CD4-positive, alpha-beta memory T cell (primary cell): ENCODE measurements at regions of chr18 and their contacts with region 1.

Region 1: GRCh38 chr18:77132371-77133050 is at the start of gene MBP:
- DNase-seq: peak; percentile 58 to 75 (median 70)
- H3K4me3 ChIP-seq: peak within 1 kb of the TSS; percentile 81 to 82
- H3K4me3 Mint-ChIP-seq: peak within 1 kb of the TSS; percentile 98 to 100 (median 98)
- H3K27ac ChIP-seq: peak within 1 kb of the TSS; percentile 85
- H3K27ac Mint-ChIP-seq: peak within 1 kb of the TSS; percentile 94 to 99 (median 97)
- H3K4me1 ChIP-seq: peaks cover 54% of the 10 kb centered on the region
- H3K4me1 Mint-ChIP-seq: peaks cover 38 to 66% (median 50%) of the 10 kb centered on the region in 4 donors
- H3K27me3 ChIP-seq: no peaks in the 10 kb centered on the region
- H3K27me3 Mint-ChIP-seq: no peaks in the 10 kb centered on the region
- total RNA-seq, gene MBP: 179 to 187 TPM

Region 2: GRCh38 chr18:77054606-77055428 is 77.7 kb before region 1 on chr18:
- CTCF ChIA-PET with region 1: interaction called, 9 read pairs
- POLR2A ChIA-PET with region 1: interaction called, 68 read pairs
- intact Hi-C with region 1: loop called (anchors 1 kb)
- DNase-seq: peak; percentile 80 to 88 (median 86)
- H3K4me3 ChIP-seq: peak overlapping the region in 1 of 2 donors; percentile 54
- H3K4me3 Mint-ChIP-seq: peak overlapping the region; percentile 72 to 92 (median 86)
- H3K27ac ChIP-seq: peak overlapping the region; percentile 84
- H3K27ac Mint-ChIP-seq: peak overlapping the region; percentile 93 to 100 (median 97)
- H3K4me1 ChIP-seq: peaks cover 83% of the 10 kb centered on the region
- H3K4me1 Mint-ChIP-seq: peaks cover 56 to 79% (median 68%) of the 10 kb centered on the region in 4 donors
- H3K27me3 ChIP-seq: no peaks in the 10 kb centered on the region
- H3K27me3 Mint-ChIP-seq: no peaks in the 10 kb centered on the region

Region 3: GRCh38 chr18:77079954-77080682 is 52.4 kb before region 1 on chr18:
- CTCF ChIA-PET with region 1: no interaction called
- POLR2A ChIA-PET with region 1: interaction called, 10 read pairs
- intact Hi-C with region 1: no loop called
- DNase-seq: peak in 2 of 5 donors; percentile 30 to 55
- H3K4me3 ChIP-seq: no peak overlapping the region
- H3K4me3 Mint-ChIP-seq: peak overlapping the region in 6 of 8 donors; percentile 41 to 69 (median 61)
- H3K27ac ChIP-seq: peak overlapping the region; percentile 38
- H3K27ac Mint-ChIP-seq: peak overlapping the region; percentile 61 to 92 (median 85)
- H3K4me1 ChIP-seq: peaks cover 80% of the 10 kb centered on the region
- H3K4me1 Mint-ChIP-seq: peaks cover 55 to 99% (median 79%) of the 10 kb centered on the region in 4 donors
- H3K27me3 ChIP-seq: no peaks in the 10 kb centered on the region
- H3K27me3 Mint-ChIP-seq: no peaks in the 10 kb centered on the region

Region 4: DNA sequence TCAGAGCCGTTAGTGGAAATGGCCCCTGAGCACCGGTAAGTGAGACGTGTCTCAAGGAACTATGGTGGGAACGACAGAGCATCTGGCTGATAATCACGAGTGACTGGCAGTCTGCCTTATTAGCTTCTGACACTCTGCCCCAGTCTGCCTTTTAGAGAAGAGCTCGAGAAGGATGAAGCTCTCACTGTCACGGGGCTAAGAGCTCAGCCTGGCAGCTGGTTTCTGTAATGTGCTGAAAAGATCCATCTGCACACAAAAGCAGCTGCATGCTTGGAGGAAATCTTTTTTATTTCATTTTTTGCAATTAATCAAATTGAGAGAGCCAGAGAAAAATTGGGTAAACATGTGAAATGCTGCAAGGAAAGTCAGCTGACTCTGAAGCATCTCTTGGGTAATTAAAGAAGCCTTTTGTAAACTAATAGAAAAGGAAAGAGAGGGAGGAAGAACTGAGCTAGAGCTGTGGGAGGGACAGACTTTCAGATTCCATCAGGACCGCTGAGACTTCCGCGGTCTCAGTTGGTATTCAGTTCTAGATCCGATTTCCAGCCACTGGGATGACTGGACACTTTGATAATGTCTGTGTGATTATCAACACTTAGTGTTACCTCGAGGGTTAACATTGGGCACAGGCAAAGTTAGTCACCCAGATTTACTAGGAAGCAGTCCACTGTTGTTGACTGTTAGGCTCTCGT is 24.4 kb before region 1 on chr18:
- CTCF ChIA-PET with region 1: interaction called, 19 read pairs
- POLR2A ChIA-PET with region 1: interaction called, 126 read pairs
- intact Hi-C with region 1: loop called (anchors 1 kb)
- DNase-seq: peak in 3 of 5 donors; percentile 33 to 67 (median 38)
- H3K4me3 ChIP-seq: no peak overlapping the region
- H3K4me3 Mint-ChIP-seq: peak overlapping the region in 7 of 8 donors; percentile 74 to 92 (median 82)
- H3K27ac ChIP-seq: peak overlapping the region; percentile 67
- H3K27ac Mint-ChIP-seq: peak overlapping the region; percentile 86 to 99 (median 97)
- H3K4me1 ChIP-seq: peaks cover 98% of the 10 kb centered on the region
- H3K4me1 Mint-ChIP-seq: peaks cover 78 to 100% (median 88%) of the 10 kb centered on the region in 4 donors
- H3K27me3 ChIP-seq: no peaks in the 10 kb centered on the region
- H3K27me3 Mint-ChIP-seq: no peaks in the 10 kb centered on the region

Region 5: GRCh38 chr18:77207540-77207939 is 75.0 kb after region 1 on chr18:
- CTCF ChIA-PET with region 1: interaction called, 15 read pairs
- POLR2A ChIA-PET with region 1: interaction called, 16 read pairs
- intact Hi-C with region 1: no loop called
- DNase-seq: peak; percentile 55 to 79 (median 67)
- H3K4me3 ChIP-seq: no peak overlapping the region
- H3K4me3 Mint-ChIP-seq: peak overlapping the region; percentile 60 to 80 (median 72)
- H3K27ac ChIP-seq: no peak overlapping the region
- H3K27ac Mint-ChIP-seq: peak overlapping the region; percentile 41 to 92 (median 85)
- H3K4me1 ChIP-seq: peaks cover 37% of the 10 kb centered on the region
- H3K4me1 Mint-ChIP-seq: peaks cover 29 to 52% (median 41%) of the 10 kb centered on the region in 4 donors
- H3K27me3 ChIP-seq: no peaks in the 10 kb centered on the region
- H3K27me3 Mint-ChIP-seq: peaks cover 0 to 4% of the 10 kb centered on the region in 2 donors